ENCODE measurements at regions of chr1 and their contacts with region 1.

Region 1: DNA sequence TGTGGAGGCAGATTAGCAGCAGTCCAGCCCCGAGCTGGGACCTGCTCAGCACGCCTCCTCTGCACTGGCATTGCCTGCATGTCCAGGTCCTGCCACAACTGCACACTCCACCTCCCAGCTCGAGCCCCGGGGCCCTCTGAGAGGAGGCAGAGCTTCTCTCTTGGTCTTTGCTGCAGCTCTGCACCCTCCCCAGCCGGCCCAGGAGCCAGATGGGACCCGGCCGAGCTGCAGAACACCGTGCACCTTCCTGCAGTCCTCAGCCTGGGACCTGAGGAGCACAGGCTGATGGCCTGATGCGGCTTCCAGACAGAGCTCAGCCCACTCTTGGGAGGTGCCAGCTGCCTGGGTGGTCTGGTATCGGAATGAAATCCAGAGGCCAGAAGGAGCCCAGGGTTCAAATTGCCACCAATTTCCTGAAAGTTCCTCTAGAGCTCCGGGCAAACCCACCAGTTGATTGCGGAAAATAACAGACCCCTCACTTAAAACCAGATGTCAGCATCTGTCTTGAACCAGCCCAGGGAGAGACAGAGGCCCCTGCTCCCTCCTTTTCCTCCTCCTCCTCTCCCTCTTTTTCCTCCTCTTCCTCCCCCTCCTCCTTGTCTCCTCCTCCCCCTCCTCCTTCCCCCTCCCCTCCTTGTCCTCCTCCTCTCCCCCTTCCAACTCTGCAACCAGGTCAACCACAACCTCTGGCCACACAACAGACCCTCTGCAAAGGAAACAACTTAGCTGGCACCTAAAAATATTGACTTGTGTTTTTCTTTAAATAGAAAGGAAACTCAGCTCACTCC is 10.6 kb upstream of the SPSB1 start:
- DNase-seq: no peak
- H3K4me3 ChIP-seq: no peak overlapping the region
- H3K4me3 Mint-ChIP-seq: peak overlapping the region in 1 of 7 donors; percentile 38
- H3K27ac ChIP-seq: no peak overlapping the region
- H3K27ac Mint-ChIP-seq: no peak overlapping the region
- H3K4me1 ChIP-seq: peaks cover 29% of the 10 kb centered on the region
- H3K4me1 Mint-ChIP-seq: peaks cover 57 to 73% (median 65%) of the 10 kb centered on the region in 3 donors
- H3K27me3 ChIP-seq: no peaks in the 10 kb centered on the region
- H3K27me3 Mint-ChIP-seq: peaks cover 3 to 4% of the 10 kb centered on the region in 2 donors

Region 2: DNA sequence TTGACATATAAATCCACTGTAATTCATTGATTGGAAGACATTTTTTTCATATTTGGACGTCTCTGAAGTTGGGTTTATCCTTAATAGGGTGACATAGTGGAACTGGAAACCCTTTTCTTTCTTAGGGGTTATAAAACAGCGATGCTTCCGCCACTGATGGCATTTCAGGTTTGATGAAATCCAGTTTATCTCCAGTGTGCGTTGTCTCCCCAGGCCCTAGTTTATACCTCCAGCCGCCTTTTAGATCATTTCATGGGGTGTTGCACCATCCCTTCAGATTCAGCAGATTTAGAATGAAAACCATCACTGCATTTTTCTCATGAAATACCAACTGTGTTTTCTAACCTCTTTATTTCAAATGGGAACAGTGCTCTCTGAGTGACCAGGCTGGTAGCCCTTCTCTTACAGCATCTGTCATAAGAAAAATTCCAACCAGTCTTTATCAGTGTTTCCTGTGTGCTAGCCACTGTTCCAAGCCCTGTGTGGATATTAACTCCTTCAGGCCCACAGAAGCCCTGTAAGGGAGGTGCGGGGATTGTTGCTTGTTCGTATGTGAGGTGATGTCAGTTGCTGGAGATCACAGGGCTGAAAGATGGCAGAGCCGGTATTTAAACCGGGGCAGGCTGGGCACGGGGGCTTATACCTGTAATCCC is 28.5 kb before region 1 on chr1:
- CTCF ChIA-PET with region 1: no interaction called
- POLR2A ChIA-PET with region 1: no interaction called
- DNase-seq: no peak
- H3K4me3 ChIP-seq: no peak overlapping the region
- H3K4me3 Mint-ChIP-seq: no peak overlapping the region
- H3K27ac ChIP-seq: no peak overlapping the region
- H3K27ac Mint-ChIP-seq: peak overlapping the region in 1 of 8 donors; percentile 33
- H3K4me1 ChIP-seq: no peaks in the 10 kb centered on the region
- H3K4me1 Mint-ChIP-seq: peaks cover 10 to 38% (median 17%) of the 10 kb centered on the region in 3 donors
- H3K27me3 ChIP-seq: no peaks in the 10 kb centered on the region
- H3K27me3 Mint-ChIP-seq: no peaks in the 10 kb centered on the region

Region 3: DNA sequence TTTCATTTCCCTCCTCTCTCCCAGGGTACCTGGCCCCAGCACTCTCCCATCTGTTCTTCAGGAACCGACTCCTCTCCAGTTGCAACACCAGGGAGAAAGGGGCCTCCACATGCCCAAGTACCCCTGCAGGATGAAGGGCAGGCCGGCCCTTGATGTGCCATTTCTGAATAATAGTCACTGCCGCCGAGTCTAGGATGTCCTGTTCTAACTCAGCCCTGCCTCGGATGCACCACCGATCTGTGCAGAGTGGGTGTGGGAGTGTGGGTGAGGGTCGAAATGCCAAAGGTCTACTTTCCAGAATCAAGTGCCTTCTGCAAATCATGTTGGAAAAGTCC is 14.8 kb before region 1 on chr1:
- CTCF ChIA-PET with region 1: interaction called, 15 read pairs
- POLR2A ChIA-PET with region 1: no interaction called
- DNase-seq: no peak
- H3K4me3 ChIP-seq: no peak overlapping the region
- H3K4me3 Mint-ChIP-seq: no peak overlapping the region
- H3K27ac ChIP-seq: no peak overlapping the region
- H3K27ac Mint-ChIP-seq: no peak overlapping the region
- H3K4me1 ChIP-seq: no peaks in the 10 kb centered on the region
- H3K4me1 Mint-ChIP-seq: peaks cover 0 to 8% (median 4%) of the 10 kb centered on the region in 3 donors
- H3K27me3 ChIP-seq: no peaks in the 10 kb centered on the region
- H3K27me3 Mint-ChIP-seq: no peaks in the 10 kb centered on the region

Region 4: GRCh38 chr1:9317591-9318417 is 35.7 kb after region 1 on chr1:
- CTCF ChIA-PET with region 1: no interaction called
- POLR2A ChIA-PET with region 1: no interaction called
- DNase-seq: no peak
- H3K4me3 ChIP-seq: no peak overlapping the region
- H3K4me3 Mint-ChIP-seq: no peak overlapping the region
- H3K27ac ChIP-seq: no peak overlapping the region
- H3K27ac Mint-ChIP-seq: peak overlapping the region in 2 of 8 donors; percentile 38 to 42
- H3K4me1 ChIP-seq: no peaks in the 10 kb centered on the region
- H3K4me1 Mint-ChIP-seq: peaks cover 10 to 24% (median 23%) of the 10 kb centered on the region in 3 donors
- H3K27me3 ChIP-seq: no peaks in the 10 kb centered on the region
- H3K27me3 Mint-ChIP-seq: peaks cover 1 to 4% of the 10 kb centered on the region in 2 donors